A549 (cell line): ENCODE measurements at regions of chr20 and their contacts with region 1.

Region 1: DNA sequence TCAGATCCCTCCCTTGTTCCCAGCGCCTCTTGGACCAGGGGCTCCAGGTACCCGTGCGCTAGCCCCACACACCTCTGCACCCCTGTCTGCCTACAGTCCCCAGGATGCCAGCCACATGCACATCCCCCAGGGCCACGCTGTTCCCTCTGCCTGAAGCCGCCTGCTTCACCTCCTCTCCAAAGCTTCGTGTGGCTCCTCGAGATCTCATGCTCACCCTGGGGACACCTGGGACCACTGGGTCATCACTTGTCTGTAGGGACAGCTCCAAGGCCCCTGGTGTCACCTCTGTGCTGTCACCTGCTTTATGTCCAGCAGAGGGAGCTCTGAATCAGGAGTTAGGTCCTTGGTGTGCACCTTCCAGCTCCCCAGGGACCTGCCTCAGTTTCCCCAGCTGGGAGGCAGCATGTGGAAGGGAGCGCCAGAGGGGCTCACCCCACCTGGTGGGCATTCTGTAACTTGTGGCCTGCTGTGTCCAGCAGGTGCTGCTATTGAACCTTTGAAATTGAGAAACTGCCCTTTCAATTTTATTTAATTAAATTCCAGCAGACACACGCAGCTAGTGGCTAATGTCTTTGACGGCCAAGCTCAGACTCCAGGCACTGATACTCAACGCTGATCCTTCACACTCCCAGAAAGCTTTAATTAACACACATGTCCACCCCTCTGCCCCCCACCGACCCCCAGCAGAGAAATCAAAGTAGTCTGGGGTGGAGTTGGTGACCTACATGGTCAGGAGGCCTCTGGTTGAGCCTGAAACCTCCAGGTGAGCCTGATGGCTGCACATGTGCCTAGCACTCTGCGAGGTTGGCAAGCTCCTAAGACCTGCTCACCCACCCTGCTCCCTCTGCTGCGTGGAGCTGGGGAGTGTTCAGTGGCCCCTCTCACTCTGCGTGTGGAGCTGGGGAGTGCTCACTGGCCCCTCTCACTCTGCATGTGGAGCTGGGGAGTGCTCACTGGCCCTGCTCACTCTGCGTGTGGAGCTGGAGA is 7.6 kb upstream of the YTHDF1 start:
- DNase-seq: peak; percentile 48 to 62
- ATAC-seq: peak; percentile 46 to 66; a peak in 5 of 6 replicates
- H3K4me3 ChIP-seq: no peak overlapping the region
- H3K27ac ChIP-seq: peak overlapping the region; percentile 89 to 99
- H3K4me1 ChIP-seq: peaks cover 46% of the 10 kb centered on the region
- CTCF ChIP-seq: peak; percentile 95
- EP300 ChIP-seq: no peak
- POLR2A ChIP-seq: no peak
- RAD21 ChIP-seq: peak; percentile 95 to 97

Region 2: GRCh38 chr20:62956387-62957135 is 267.0 kb before region 1 on chr20:
- CTCF ChIA-PET with region 1: no interaction called
- POLR2A ChIA-PET with region 1: no interaction called
- DNase-seq: no peak
- ATAC-seq: no peak; a peak in 1 of 6 replicates
- H3K4me3 ChIP-seq: no peak overlapping the region
- H3K27ac ChIP-seq: no peak overlapping the region
- H3K4me1 ChIP-seq: peaks cover 9% of the 10 kb centered on the region; the same call in 2 of the 3 replicates
- CTCF ChIP-seq: no peak
- EP300 ChIP-seq: no peak
- POLR2A ChIP-seq: no peak
- RAD21 ChIP-seq: no peak

Region 3: DNA sequence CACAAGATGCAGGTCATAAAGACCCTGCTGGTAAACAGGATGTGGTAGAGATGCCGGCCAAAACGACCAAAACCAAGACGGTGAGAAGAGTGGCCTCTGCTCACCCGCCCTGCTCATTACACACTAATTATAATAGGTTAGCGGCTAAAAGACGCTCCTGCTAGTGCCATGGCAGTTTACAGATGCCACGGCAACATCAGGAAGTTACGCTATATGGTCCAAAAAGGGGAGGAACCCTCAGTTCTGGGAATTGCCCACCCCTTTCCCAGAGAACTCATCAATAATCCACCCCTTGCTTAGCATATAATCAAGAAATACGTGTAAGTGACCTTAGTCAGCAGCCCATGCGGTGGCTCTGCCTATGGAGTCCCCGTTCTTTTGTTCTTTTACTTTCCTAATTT is 234.3 kb before region 1 on chr20:
- CTCF ChIA-PET with region 1: no interaction called
- POLR2A ChIA-PET with region 1: no interaction called
- DNase-seq: no peak
- ATAC-seq: no peak
- H3K4me3 ChIP-seq: no peak overlapping the region
- H3K27ac ChIP-seq: no peak overlapping the region
- H3K4me1 ChIP-seq: no peaks in the 10 kb centered on the region
- CTCF ChIP-seq: no peak
- EP300 ChIP-seq: no peak
- POLR2A ChIP-seq: no peak
- RAD21 ChIP-seq: no peak

Region 4: GRCh38 chr20:63042448-63043071 is 181.0 kb before region 1 on chr20:
- CTCF ChIA-PET with region 1: no interaction called
- POLR2A ChIA-PET with region 1: no interaction called
- DNase-seq: no peak
- ATAC-seq: no peak
- H3K4me3 ChIP-seq: no peak overlapping the region
- H3K27ac ChIP-seq: no peak overlapping the region
- H3K4me1 ChIP-seq: no peaks in the 10 kb centered on the region
- CTCF ChIP-seq: no peak
- EP300 ChIP-seq: no peak
- POLR2A ChIP-seq: no peak
- RAD21 ChIP-seq: 0 out of 5 replicates have a peak, but pooled peaks of 1 of the 2 experiments have one; percentile 3

Region 5: DNA sequence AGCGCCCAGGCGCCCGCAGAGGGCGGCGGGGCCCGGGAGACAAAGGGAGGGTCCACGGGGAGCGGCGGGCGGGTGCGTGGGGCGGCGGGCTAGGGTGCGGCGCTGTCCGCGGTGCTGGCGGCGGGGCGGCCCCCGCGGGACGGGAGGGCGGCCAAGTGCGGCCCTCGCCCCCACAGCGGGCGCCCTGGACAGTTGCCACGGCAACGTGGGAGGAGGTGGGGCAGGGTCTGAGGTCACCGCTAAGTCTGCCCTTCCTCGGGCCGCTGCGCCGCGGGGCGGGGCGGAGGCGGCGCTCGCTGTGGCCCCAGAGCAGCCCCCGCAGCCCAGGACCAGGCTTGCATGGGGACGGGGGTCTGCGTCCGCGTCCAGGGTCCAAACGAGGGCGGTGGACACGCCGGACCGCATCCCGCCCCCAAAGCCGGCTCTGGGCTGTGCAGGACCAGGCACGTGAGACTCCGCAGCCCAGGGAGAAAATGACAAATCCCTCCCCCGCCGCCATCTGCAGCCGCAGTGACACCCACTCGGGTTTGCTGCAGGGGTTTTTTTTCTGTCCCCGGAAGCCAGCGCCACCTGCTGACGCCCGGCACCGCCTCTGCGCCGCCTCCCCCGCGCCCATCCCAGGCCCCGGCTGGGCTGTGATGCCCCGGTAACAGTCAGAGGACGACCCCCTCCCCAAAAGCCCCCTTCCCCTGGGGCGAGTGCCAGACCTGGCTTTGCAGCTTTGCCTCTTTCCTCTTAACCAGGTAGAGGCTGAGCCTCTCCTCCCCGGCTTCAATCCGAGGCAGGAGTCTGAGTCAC is 44.4 kb before region 1 on chr20:
- CTCF ChIA-PET with region 1: interaction called, 14 read pairs
- POLR2A ChIA-PET with region 1: no interaction called
- DNase-seq: peak in 1 of 2 experiments; percentile 49
- ATAC-seq: peak in 1 of 2 experiments; percentile 8; a peak in 1 of 6 replicates
- H3K4me3 ChIP-seq: peak overlapping the region; percentile 47
- H3K27ac ChIP-seq: peak overlapping the region in 1 of 2 experiments; percentile 38; a peak in 2 of 6 replicates
- H3K4me1 ChIP-seq: peaks cover 46% of the 10 kb centered on the region
- CTCF ChIP-seq: peak; percentile 60
- EP300 ChIP-seq: no peak
- POLR2A ChIP-seq: no peak
- RAD21 ChIP-seq: peak; percentile 52 to 59

Region 6: GRCh38 chr20:63206904-63207303 is 16.6 kb before region 1 on chr20:
- CTCF ChIA-PET with region 1: interaction called, 60 read pairs
- POLR2A ChIA-PET with region 1: no interaction called
- DNase-seq: no peak
- ATAC-seq: no peak
- H3K4me3 ChIP-seq: no peak overlapping the region
- H3K27ac ChIP-seq: no peak overlapping the region
- H3K4me1 ChIP-seq: peaks cover 13% of the 10 kb centered on the region; the same call in 1 of the 3 replicates
- CTCF ChIP-seq: no peak
- EP300 ChIP-seq: no peak
- POLR2A ChIP-seq: no peak
- RAD21 ChIP-seq: no peak

Region 7: DNA sequence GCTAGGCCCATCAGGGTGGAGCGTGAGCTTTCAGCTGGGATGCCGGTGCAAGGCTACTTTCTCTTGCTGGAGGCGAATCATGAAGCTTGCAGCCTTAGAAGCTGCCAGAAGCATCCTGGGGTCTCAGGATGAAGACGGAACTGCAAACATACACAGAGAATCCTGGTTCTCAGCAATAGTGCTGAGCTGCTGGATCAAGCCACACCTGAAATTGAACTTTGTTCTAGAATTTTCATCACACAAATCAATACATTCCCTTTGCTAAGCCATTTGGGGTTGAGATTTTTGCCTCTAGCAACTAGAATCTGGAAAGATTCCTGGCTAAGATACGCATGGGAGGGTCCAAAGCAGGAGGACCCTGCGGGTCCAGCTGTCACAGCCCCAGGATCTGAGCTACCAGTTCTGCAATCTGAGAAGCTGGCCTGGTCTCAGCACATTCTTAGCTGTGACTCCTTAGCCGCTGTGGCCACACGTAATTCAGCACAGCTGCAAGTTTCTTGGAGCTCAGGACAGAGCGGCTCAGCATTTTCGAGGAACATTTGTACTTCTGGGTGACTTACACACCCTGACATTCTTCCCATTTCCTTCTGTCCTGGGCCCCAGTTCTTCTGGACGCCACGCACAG is 42.5 kb after region 1 on chr20:
- CTCF ChIA-PET with region 1: interaction called, 401 read pairs
- POLR2A ChIA-PET with region 1: interaction called, 3 read pairs
- DNase-seq: no peak
- ATAC-seq: no peak
- H3K4me3 ChIP-seq: no peak overlapping the region
- H3K27ac ChIP-seq: no peak overlapping the region
- H3K4me1 ChIP-seq: peaks cover 11% of the 10 kb centered on the region; the same call in 1 of the 3 replicates
- CTCF ChIP-seq: no peak
- EP300 ChIP-seq: no peak
- POLR2A ChIP-seq: no peak
- RAD21 ChIP-seq: no peak

Region 8: DNA sequence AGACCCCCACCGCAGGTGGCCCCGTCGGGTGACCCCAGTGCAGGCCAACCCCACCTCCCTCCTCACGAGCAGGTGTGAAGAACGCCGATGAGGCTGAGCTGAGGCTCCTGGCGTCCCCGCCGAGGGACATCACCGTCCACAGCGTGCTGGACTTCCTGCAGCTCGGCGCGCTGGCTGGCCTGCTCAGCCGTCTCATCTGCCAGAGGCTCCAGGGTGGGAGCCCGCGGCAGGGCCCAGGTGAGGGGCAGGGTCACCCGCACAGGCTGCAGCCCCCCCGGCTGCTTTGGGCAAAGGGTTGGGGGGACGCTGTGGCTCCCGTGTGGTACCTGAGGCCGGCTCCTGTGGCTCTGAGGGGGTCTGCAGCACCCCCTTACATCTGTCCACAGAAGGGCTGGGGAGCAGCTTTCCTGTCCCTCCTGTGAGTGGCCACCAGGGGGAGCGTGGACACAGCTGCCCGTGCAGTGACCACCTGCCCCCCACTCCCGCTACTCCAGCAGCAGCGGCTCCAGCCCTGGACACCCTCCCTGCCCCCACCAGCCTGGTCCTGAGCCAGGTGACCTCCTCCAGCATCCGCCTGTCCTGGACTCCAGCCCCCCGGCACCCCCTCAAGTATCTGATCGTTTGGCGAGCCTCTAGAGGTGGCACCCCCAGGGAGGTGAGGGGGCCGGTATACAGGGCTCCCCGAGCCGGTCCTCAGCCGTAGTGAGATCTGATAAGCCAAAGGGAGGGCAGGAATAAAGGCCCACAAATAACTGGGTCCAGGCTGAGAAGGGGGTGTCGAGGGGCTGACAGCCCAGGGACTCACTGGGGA is 86.0 kb after region 1 on chr20:
- CTCF ChIA-PET with region 1: interaction called, 17 read pairs
- POLR2A ChIA-PET with region 1: no interaction called
- DNase-seq: peak; percentile 45 to 58
- ATAC-seq: peak; percentile 55 to 86; a peak in 5 of 6 replicates
- H3K4me3 ChIP-seq: no peak overlapping the region
- H3K27ac ChIP-seq: no peak overlapping the region
- H3K4me1 ChIP-seq: 0 out of 3 replicates have a peak, but pooled peaks cover 3% of the 10 kb centered on the region
- CTCF ChIP-seq: peak; percentile 72
- EP300 ChIP-seq: no peak
- POLR2A ChIP-seq: no peak
- RAD21 ChIP-seq: peak; percentile 71 to 73